Prostate gland (tissue), 2 donors: ENCODE measurements at regions of chr6 and their contacts with region 1.

Region 1: DNA sequence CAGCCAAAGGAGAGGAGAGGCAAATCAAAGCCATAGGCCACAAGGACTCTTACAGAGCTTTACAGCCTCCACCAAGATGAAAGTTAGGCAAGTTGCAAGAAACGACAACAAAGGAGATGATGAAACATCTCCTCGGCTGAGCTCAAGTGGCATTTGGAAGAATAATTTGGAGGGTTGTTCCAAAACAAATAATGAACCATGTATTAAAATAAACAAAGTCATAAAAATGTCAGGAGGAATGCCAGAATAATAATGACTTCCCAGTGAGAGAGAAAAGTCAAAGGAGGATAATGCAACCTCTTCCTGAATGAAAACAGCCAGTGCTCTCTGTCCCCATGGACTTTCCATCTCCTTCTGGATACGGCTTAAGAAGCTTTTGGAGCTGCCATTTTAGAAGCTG is 371.4 kb upstream of the ID4 start:
- DNase-seq: peak; percentile 50
- H3K4me3 ChIP-seq: no peak overlapping the region
- H3K27ac ChIP-seq: no peak overlapping the region
- H3K4me1 ChIP-seq: peaks cover 12% of the 10 kb centered on the region
- H3K27me3 ChIP-seq: no peaks in the 10 kb centered on the region
- CTCF ChIP-seq: no peak
- POLR2A ChIP-seq: no peak

Region 2: DNA sequence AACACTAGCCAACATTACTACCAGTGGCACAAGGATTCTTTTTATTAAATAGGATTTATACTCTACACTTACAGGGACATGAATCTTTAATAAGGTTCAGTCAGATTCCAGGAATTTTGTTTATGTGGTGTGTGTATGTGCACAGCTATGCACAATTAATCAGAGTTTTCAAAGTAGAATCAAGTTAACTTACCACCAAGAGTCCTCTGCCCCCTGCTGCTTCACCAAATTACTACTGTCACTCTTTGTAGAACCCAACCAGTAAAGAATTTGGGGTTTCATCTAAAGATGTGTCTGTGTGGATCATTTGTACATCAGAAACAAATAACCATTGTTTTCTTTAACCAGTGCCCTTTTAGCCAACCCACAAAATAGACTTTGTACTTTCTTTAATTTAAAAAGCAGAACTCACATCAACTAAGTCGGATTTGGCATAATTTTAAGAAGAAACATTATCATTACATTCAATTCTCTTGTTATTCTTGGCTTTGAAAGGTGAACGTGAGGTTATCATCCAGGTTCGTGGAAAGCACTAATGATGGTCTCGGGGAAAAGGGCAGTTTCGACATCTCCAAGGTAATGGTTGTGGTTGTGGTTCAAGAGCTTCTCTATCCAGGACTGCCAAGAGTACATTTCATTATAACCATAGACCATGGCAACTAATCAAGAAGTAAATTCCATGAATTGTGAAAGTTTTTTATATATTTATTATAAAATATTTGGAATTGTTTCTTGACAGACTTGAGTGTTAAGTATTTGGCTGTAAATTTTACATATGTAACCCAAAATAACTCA is 142.9 kb before region 1 on chr6:
- intact Hi-C with region 1: loop called (anchors 10 kb)
- DNase-seq: no peak
- H3K4me3 ChIP-seq: no peak overlapping the region
- H3K27ac ChIP-seq: no peak overlapping the region
- H3K4me1 ChIP-seq: no peaks in the 10 kb centered on the region
- H3K27me3 ChIP-seq: no peaks in the 10 kb centered on the region
- CTCF ChIP-seq: no peak
- POLR2A ChIP-seq: no peak

Region 3: GRCh38 chr6:19368509-19368908 is 97.3 kb before region 1 on chr6:
- intact Hi-C with region 1: no loop called
- DNase-seq: no peak
- H3K4me3 ChIP-seq: no peak overlapping the region
- H3K27ac ChIP-seq: no peak overlapping the region
- H3K4me1 ChIP-seq: no peaks in the 10 kb centered on the region
- H3K27me3 ChIP-seq: no peaks in the 10 kb centered on the region
- CTCF ChIP-seq: no peak
- POLR2A ChIP-seq: no peak